CD4-positive, alpha-beta memory T cell (primary cell): ENCODE measurements at regions of chr1 and their contacts with region 1.

Region 1: GRCh38 chr1:226457307-226457712 is 49.4 kb upstream of the PARP1 start:
- DNase-seq: peak; percentile 52 to 67 (median 61)
- H3K4me3 ChIP-seq: peak overlapping the region in 1 of 2 donors; percentile 48
- H3K4me3 Mint-ChIP-seq: peak overlapping the region; percentile 74 to 92 (median 86)
- H3K27ac ChIP-seq: no peak overlapping the region
- H3K27ac Mint-ChIP-seq: peak overlapping the region; percentile 46 to 95 (median 89)
- H3K4me1 ChIP-seq: peaks cover 7% of the 10 kb centered on the region
- H3K4me1 Mint-ChIP-seq: peaks cover 7 to 14% (median 11%) of the 10 kb centered on the region in 4 donors
- H3K27me3 ChIP-seq: no peaks in the 10 kb centered on the region
- H3K27me3 Mint-ChIP-seq: peaks cover 0 to 2% of the 10 kb centered on the region in 2 donors

Region 2: DNA sequence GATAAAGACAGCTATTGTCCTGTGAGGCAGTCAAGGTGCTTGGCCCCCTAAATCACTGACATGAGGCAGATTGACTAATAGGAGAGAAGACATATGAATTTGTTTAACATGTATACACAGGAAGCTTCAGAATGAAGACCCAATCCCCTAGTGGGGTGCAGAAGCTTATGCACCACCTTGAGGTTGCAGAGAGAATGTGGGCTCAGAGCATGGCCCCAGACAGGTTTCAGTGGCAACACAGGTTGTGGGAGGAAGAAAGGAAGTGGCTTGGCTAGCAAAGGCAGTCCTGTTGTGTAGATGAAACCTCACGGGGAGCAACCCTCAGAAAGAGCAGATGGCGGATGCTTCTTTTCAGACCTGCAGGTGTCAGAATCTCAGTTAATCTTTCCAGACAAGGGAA is 12.4 kb before region 1 on chr1:
- CTCF ChIA-PET with region 1: interaction called, 43 read pairs
- POLR2A ChIA-PET with region 1: interaction called, 6 read pairs
- intact Hi-C with region 1: no loop called
- DNase-seq: peak; percentile 77 to 82 (median 78)
- H3K4me3 ChIP-seq: no peak overlapping the region
- H3K4me3 Mint-ChIP-seq: peak overlapping the region; percentile 33 to 75 (median 61)
- H3K27ac ChIP-seq: no peak overlapping the region
- H3K27ac Mint-ChIP-seq: peak overlapping the region; percentile 55 to 91 (median 82)
- H3K4me1 ChIP-seq: peaks cover 29% of the 10 kb centered on the region
- H3K4me1 Mint-ChIP-seq: peaks cover 21 to 34% (median 26%) of the 10 kb centered on the region in 4 donors
- H3K27me3 ChIP-seq: no peaks in the 10 kb centered on the region
- H3K27me3 Mint-ChIP-seq: no peaks in the 10 kb centered on the region

Region 3: DNA sequence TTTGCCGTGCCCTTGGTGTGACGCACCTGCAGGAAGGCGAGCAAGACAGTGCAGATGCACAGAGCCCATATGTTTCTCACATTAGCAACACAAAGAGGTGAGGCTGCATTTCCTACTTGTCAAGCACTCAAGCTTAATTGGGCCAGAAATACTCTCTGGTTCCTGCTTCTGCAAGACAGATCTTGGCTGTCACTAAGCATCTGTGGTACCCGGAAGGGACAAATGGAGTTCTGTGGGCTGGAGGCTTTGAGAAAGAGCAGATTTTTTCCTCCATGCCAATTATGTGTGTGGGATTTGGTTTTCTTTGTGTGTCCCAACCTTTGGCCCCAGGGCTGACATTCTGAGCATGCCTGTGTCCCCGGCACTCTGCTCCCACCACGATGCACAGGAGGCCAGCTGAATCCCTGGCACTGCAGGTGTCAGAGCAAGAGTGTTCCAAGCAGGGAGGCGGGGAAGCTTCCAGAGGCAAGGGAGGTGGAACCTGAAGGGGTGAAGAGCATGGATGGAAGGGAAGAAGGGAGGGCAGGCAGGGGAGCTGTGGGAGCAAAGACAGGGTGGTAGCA is 39.2 kb after region 1 on chr1:
- CTCF ChIA-PET with region 1: no interaction called
- POLR2A ChIA-PET with region 1: no interaction called
- intact Hi-C with region 1: no loop called
- DNase-seq: no peak
- H3K4me3 ChIP-seq: no peak overlapping the region
- H3K4me3 Mint-ChIP-seq: no peak overlapping the region
- H3K27ac ChIP-seq: no peak overlapping the region
- H3K27ac Mint-ChIP-seq: no peak overlapping the region
- H3K4me1 ChIP-seq: no peaks in the 10 kb centered on the region
- H3K4me1 Mint-ChIP-seq: no peaks in the 10 kb centered on the region
- H3K27me3 ChIP-seq: no peaks in the 10 kb centered on the region
- H3K27me3 Mint-ChIP-seq: peaks cover 9 to 23% of the 10 kb centered on the region in 2 donors